ENCODE measurements at regions of chr12 and their contacts with region 1.

Region 1: GRCh38 chr12:34292736-34293625 is 270.7 kb downstream of the ALG10 start:
- DNase-seq: peak; percentile 37 to 73 (median 42)
- ATAC-seq: peak; percentile 88
- H3K4me3 ChIP-seq: no peak overlapping the region
- H3K27ac ChIP-seq: no peak overlapping the region
- H3K4me1 ChIP-seq: peaks cover 0 to 16% of the 10 kb centered on the region in 2 experiments; a peak in 2 of 5 replicates
- H3K27me3 ChIP-seq: peaks cover 6 to 29% of the 10 kb centered on the region in 2 experiments; a peak in 3 of 5 replicates
- CTCF ChIP-seq: peak; percentile 62 to 70 (median 63)
- EP300 ChIP-seq: no peak
- POLR2A ChIP-seq: no peak
- RAD21 ChIP-seq: peak in 1 of 2 experiments; percentile 48; a peak in 2 of 4 replicates

Region 2: GRCh38 chr12:34033628-34034282 is 259.2 kb before region 1 on chr12:
- CTCF ChIA-PET with region 1: no interaction called
- POLR2A ChIA-PET with region 1: no interaction called
- in situ Hi-C with region 1: loop called (anchors 10 kb)
- intact Hi-C with region 1: loop called (anchors 1 kb)
- DNase-seq: peak; percentile 18 to 53 (median 24)
- ATAC-seq: no peak
- H3K4me3 ChIP-seq: no peak overlapping the region
- H3K27ac ChIP-seq: no peak overlapping the region
- H3K4me1 ChIP-seq: no peaks in the 10 kb centered on the region
- H3K27me3 ChIP-seq: no peaks in the 10 kb centered on the region
- CTCF ChIP-seq: peak in 2 of 3 experiments; percentile 27 to 59; a peak in 3 of 6 replicates
- EP300 ChIP-seq: no peak
- POLR2A ChIP-seq: no peak
- RAD21 ChIP-seq: peak; percentile 27 to 58; a peak in 2 of 4 replicates

Region 3: GRCh38 chr12:34142430-34142829 is 150.6 kb before region 1 on chr12:
- CTCF ChIA-PET with region 1: no interaction called
- POLR2A ChIA-PET with region 1: no interaction called
- in situ Hi-C with region 1: no loop called
- intact Hi-C with region 1: no loop called
- DNase-seq: no peak
- ATAC-seq: no peak
- H3K4me3 ChIP-seq: no peak overlapping the region
- H3K27ac ChIP-seq: no peak overlapping the region
- H3K4me1 ChIP-seq: no peaks in the 10 kb centered on the region
- H3K27me3 ChIP-seq: no peaks in the 10 kb centered on the region
- CTCF ChIP-seq: no peak
- EP300 ChIP-seq: no peak
- POLR2A ChIP-seq: no peak
- RAD21 ChIP-seq: no peak

Region 4: DNA sequence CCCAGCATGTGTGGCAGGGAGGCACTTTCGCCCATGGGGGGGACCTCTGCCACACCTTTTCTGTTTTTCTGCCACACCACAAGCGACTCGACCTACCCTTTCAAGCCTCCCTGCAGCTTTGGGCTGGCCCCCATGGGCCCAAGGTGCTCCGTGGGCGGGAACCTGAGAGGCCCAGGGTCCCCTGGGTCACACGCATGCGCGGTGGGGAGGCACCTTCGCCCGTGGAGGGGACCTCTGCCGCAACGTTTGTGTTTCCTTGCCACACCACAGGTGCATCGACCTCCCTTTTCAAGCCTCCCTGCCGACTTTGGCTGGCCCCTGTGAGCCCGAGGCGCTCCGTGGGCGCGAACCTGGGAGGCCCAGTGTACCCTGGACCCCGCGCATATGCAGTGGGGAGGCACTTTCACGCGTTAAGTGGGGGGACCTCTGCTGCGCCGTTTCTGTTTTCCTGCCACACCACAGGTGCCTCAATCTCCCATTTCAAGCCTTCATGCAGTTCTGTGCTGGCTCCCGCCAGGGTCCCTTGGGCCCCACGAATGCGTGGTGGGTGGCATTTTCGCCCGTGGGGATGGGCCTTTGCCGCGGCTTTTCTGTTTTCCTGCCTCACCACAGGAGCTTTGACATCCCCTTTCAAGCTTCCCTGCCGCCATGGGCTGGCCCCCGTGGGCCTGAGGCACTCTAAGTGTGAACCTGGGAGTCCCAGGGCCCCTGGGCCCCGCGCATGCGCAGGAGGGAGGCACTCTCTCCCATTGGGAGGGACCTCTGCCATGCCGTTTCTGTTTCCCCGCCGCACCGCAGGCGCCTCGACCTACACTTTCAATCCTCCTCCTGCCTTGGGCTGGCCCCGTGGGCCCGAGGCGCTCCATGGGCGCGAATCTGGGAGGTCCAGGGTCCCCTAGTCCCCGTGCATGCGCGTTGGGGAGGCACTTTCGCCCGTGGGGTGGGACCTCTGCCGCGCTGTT is 61.5 kb after region 1 on chr12:
- CTCF ChIA-PET with region 1: no interaction called
- POLR2A ChIA-PET with region 1: no interaction called
- in situ Hi-C with region 1: no loop called
- intact Hi-C with region 1: loop called (anchors 10 kb)
- DNase-seq: peak in 2 of 4 experiments; percentile 19 to 24
- ATAC-seq: no peak
- H3K4me3 ChIP-seq: no peak overlapping the region
- H3K27ac ChIP-seq: no peak overlapping the region
- H3K4me1 ChIP-seq: peaks cover 19 to 95% of the 10 kb centered on the region in 2 experiments
- H3K27me3 ChIP-seq: peaks cover 0 to 28% of the 10 kb centered on the region in 2 experiments; a peak in 3 of 5 replicates
- CTCF ChIP-seq: no peak
- EP300 ChIP-seq: no peak
- POLR2A ChIP-seq: no peak
- RAD21 ChIP-seq: no peak